Activated CD4-positive, alpha-beta memory T cell treated with anti-CD3 and anti-CD28 coated beads for 36 hours (primary cell): ENCODE measurements at regions of chr20 and their contacts with region 1.

Region 1: GRCh38 chr20:38472513-38473372 is at the start of gene RALGAPB:
- DNase-seq: peak; percentile 99
- H3K4me3 Mint-ChIP-seq: peak within 1 kb of the TSS; percentile 84
- H3K27ac Mint-ChIP-seq: peak within 1 kb of the TSS; percentile 84
- H3K4me1 Mint-ChIP-seq: peaks cover 46% of the 10 kb centered on the region
- H3K27me3 Mint-ChIP-seq: no peaks in the 10 kb centered on the region
- total RNA-seq, gene RALGAPB: 25.7 to 25.8 TPM

Region 2: GRCh38 chr20:38033310-38034107 is 439.2 kb before region 1 on chr20 and contains the starts of genes RPRD1B and TTI1:
- CTCF ChIA-PET with region 1: no interaction called
- POLR2A ChIA-PET with region 1: no interaction called
- intact Hi-C with region 1: loop called (anchors 1 kb)
- DNase-seq: peak; percentile 94
- H3K4me3 Mint-ChIP-seq: peak within 1 kb of the TSS; percentile 91
- H3K27ac Mint-ChIP-seq: peak within 1 kb of the TSS; percentile 98
- H3K4me1 Mint-ChIP-seq: peaks cover 66% of the 10 kb centered on the region
- H3K27me3 Mint-ChIP-seq: no peaks in the 10 kb centered on the region
- total RNA-seq, gene RPRD1B: 26.2 to 28.9 TPM
- total RNA-seq, gene TTI1: 31.8 to 32.7 TPM

Region 3: GRCh38 chr20:38402816-38403215 is 69.9 kb before region 1 on chr20:
- CTCF ChIA-PET with region 1: no interaction called
- POLR2A ChIA-PET with region 1: no interaction called
- intact Hi-C with region 1: no loop called
- DNase-seq: no peak
- H3K4me3 Mint-ChIP-seq: no peak overlapping the region
- H3K27ac Mint-ChIP-seq: no peak overlapping the region
- H3K4me1 Mint-ChIP-seq: no peaks in the 10 kb centered on the region
- H3K27me3 Mint-ChIP-seq: peaks cover 3% of the 10 kb centered on the region

Region 4: DNA sequence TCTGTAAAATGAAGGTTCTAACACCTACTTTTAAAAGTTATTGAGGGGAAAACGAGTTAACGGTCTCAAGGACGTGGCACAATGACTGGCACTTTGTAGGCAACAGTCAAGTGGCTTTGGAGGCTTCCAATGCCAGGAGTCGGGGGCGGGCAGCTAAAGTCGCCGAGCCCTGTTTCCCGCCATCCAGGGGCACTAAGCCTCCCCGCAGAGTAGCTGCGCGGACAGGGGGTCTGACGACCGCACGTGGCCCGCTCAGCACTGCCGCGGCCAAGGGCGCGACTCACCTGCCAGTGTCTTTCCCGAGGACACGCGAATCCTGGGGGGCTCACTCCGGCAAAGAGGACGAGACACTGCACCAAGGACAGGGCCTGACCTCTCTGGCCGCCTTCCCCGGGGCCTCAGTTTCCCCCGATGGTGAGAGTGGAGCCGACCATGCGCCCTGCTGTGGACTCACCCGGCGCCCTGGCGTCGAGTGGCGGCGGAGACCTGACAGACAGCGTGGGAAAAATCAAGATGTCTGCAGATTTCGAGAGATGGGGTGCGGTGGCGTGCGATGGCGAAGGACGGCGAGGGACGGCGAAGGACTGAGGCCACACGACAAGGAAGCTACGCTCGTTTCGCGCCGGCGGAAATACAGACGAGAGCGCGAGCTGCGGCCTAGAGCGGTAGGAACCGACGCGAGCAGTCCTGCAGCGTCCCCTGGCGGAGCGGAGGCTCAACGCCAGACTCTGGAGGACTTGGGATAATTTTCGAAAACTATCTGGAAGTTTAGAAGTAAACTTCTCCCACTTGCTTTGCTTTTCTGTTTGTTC is 37.8 kb before region 1 on chr20 and contains the start of gene SNHG17:
- CTCF ChIA-PET with region 1: interaction called, 38 read pairs
- POLR2A ChIA-PET with region 1: interaction called, 13 read pairs
- intact Hi-C with region 1: loop called (anchors 1 kb)
- DNase-seq: peak; percentile 92
- H3K4me3 Mint-ChIP-seq: peak within 1 kb of the TSS; percentile 97
- H3K27ac Mint-ChIP-seq: peak within 1 kb of the TSS; percentile 97
- H3K4me1 Mint-ChIP-seq: peaks cover 34% of the 10 kb centered on the region
- H3K27me3 Mint-ChIP-seq: peaks cover 6% of the 10 kb centered on the region
- total RNA-seq, gene SNHG17: 55.4 to 55.6 TPM

Region 5: DNA sequence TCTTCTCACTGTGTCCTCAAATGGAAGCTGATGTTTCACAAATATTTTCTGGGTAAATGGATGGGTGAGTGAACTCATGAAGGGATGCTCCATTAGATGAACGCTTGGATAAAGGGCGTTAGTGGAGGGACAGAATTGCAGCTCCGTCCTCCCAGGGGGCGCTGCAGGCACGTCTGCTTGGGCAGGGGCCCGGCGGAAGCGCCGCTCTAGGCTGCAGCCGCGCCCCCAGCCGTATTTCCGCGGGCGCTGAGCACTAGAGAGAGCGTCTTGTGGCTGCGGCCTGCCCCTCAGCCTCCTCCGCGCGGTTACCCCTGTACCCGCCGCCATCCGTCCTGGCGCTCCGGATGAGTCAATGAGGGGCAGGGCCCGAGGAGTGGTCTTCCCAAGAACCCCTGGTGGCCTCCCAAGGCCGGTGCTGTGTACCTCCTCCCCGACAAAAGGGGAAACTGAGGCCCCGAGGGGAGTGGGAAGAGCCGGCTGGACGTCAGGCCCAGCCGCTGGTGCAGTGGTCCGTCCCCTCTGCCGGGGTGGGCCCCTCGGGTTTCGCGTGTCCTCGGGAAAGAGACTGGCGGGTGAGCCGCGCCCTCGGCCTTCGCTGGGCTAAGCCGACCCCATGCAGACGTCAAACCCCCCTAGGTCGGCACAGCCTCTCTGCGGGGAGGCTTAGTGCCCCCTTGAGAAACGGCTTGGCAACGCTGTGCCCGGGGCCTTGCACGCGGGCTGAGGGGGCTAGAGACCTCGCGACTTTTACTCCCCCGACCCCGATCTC is 26.1 kb before region 1 on chr20:
- CTCF ChIA-PET with region 1: interaction called, 68 read pairs
- POLR2A ChIA-PET with region 1: interaction called, 13 read pairs
- intact Hi-C with region 1: loop called (anchors 1 kb)
- DNase-seq: peak; percentile 95
- H3K4me3 Mint-ChIP-seq: peak overlapping the region; percentile 76
- H3K27ac Mint-ChIP-seq: peak overlapping the region; percentile 80
- H3K4me1 Mint-ChIP-seq: peaks cover 30% of the 10 kb centered on the region
- H3K27me3 Mint-ChIP-seq: no peaks in the 10 kb centered on the region